Posterior vena cava (tissue), 2 donors: ENCODE measurements at regions of chr7 and their contacts with region 1.

Region 1: DNA sequence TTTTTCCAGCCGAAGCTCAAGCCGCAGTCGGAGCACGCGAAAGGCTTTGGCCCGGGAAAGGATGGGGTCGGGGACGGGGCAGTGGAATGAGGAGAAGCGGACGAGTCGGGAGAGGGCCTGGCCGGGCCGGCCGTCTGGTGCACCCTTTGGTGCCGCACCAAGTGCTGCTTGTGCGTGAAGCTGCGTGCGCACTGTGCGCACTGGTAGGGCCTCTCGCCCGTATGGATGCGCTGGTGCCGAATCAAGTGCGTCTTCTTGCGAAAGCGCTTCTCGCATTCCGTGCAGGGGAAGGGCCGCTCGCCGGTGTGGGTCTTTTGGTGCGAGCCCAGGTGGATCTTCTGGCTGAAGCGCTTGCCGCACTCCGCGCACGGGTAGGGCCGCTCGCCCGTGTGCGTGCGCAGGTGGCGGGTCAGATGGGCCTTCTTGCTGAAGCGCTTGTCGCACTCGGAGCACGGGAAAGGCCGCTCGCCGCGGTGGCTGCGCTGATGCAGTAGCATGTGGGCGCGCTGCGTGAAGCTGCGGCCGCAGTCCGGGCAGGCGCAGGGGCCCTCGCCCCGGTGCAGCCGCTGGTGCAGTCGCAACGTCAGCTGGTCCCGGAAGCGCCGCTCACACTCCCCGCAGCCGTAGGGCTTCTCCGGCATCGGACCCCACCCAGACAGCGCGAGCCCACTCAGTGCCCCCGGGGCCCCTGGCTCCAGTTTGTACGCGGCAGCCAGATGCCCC is 7.8 kb downstream of the ZNF467 start:
- DNase-seq: no peak

Region 2: DNA sequence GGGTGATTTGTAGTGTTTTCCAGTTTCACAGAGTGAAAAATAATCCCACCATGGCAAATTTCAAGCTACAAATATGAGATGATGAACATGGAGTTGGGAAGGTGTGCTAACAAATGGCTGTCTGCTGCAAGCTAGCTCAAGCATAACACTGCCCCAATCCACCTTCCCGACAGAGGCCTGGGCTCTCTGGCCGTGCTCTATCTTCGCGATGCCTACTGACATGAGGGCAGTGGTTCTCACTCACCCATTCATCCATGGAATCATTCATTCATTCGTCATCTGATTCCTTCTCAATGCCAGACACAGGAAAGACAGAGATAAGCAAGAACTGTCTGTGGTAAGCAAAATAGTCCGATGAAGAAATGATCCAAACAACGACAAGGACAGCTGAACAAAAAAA is 57.5 kb before region 1 on chr7:
- intact Hi-C with region 1: loop called in 1 of 2 experiments (anchors 2 kb)
- DNase-seq: no peak

Region 3: DNA sequence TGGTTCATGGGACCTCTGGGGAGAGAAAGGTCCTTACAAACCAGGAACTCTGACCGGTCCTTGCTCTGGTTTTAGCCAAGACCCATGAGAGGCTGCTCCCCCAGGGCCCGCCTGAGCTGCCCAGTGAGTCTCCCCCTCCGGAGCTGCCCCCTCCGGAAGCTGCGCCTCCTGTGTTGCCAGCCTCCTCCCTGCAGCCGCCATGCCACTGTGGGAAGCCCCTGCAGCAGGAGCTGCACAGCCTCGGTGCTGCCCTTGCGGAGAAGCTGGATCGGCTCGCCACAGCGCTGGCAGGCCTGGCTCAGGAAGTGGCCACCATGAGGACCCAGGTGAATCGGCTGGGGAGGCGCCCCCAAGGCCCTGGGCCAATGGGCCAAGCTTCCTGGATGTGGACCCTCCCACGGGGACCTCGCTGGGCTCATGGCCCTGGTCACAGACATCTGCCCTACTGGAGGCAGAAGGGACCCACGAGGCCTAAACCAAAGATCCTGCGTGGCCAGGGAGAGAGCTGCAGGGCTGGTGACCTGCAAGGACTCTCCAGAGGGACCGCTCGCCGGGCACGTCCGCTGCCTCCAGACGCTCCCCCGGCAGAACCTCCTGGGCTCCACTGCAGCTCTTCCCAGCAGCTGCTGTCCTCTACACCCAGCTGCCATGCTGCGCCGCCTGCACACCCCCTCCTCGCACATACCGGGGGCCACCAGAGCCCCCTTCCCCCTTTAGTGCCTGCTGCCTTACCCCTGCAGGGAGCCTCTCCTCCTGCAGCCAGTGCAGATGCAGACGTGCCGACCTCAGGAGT is 32.2 kb before region 1 on chr7:
- intact Hi-C with region 1: loop called in 1 of 2 experiments (anchors 1 kb)
- DNase-seq: peak; percentile 68

Region 4: DNA sequence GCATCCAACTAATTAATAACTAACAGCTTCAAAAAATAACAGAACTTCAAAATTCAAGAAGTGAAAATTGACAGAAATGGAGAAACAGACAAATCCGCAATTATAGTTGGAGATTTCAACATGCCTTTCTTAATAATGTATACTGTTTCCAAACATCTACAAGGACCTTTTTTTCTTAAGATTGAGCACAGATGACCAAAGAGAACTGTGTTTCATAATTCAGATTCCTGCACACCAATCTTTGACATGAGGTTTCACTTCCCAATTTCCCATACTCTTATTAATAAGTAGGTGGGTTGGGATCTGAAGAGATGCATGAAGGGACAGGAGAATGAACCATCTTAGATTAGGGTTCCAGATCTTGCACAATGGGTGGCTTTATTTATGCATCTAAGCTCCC is 724.2 kb after region 1 on chr7:
- intact Hi-C with region 1: no loop called
- DNase-seq: no peak